ENCODE measurements at regions of chr3 and their contacts with region 1.

Region 1: DNA sequence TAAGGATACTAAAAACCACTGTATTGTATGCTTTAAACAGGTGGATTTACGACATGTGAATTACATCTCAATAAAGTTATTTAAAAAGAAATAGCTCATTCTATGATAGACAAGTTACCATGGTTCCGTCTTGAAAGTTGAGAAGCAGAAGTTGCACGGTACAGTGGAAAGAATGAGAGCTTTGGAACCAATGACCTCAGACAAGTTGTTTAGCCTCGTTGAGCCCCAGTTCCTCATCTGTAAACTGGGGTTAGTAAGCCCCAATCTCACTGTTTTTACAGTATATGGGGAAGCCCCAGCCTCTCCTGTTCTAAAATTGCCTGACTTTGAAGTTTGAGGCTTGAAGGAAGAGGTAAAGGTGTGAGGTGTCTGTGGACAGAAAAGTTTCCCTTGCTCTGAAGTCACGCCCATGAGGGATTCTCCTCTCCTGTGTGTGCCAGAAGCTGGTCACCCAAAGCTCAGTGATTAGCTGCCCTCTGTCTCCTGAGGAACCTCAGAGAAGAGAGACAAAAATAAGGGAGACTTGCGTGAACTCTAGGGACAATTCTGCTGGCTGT is 10.0 kb downstream of the CRYGS start:
- DNase-seq: peak in 1 of 5 donors; percentile 25
- H3K4me3 ChIP-seq: no peak overlapping the region
- H3K27ac ChIP-seq: no peak overlapping the region
- H3K4me1 ChIP-seq: peaks cover 0 to 2% (median 0%) of the 10 kb centered on the region in 3 donors
- H3K27me3 ChIP-seq: no peaks in the 10 kb centered on the region
- CTCF ChIP-seq: no peak

Region 2: GRCh38 chr3:186259612-186260383 is 274.4 kb before region 1 on chr3:
- intact Hi-C with region 1: loop called (anchors 10 kb)
- DNase-seq: peak; percentile 80 to 86 (median 85)
- H3K4me3 ChIP-seq: peak overlapping the region in 1 of 3 donors; percentile 33
- H3K27ac ChIP-seq: no peak overlapping the region
- H3K4me1 ChIP-seq: peaks cover 0 to 4% (median 0%) of the 10 kb centered on the region in 3 donors
- H3K27me3 ChIP-seq: no peaks in the 10 kb centered on the region
- CTCF ChIP-seq: peak; percentile 67

Measured in kidney (tissue), 22 donors.